HEK293T (cell line): ENCODE measurements at regions of chr11 and their contacts with region 1.

Region 1: DNA sequence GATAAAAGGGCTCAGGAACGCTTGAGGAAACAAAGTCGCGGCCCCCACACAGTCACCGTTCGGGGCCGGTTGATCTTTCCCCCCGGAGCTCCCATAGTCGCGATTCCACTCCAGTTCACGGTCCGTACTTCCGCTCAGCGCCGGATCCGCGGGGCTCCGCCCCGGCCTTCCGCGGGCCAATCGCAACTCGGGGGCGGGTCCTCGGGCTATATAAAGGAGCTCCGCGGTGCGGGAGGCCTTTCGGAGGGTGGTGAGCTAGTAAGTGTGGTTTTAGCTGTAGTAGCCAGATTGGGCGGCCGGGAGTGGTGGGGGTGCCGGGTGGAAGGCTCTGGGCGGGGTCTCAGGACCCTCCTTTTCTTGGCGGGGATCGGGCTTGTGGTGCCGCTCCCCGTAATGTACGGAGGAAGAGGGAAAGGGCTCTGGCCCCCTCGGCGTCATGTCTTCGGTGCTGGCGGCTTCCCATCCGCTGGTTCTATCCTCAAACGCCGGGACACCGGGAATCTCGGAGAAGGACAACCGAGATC is at the starts of genes C11orf98 and CSKMT:
- DNase-seq: peak; percentile 94

Region 2: DNA sequence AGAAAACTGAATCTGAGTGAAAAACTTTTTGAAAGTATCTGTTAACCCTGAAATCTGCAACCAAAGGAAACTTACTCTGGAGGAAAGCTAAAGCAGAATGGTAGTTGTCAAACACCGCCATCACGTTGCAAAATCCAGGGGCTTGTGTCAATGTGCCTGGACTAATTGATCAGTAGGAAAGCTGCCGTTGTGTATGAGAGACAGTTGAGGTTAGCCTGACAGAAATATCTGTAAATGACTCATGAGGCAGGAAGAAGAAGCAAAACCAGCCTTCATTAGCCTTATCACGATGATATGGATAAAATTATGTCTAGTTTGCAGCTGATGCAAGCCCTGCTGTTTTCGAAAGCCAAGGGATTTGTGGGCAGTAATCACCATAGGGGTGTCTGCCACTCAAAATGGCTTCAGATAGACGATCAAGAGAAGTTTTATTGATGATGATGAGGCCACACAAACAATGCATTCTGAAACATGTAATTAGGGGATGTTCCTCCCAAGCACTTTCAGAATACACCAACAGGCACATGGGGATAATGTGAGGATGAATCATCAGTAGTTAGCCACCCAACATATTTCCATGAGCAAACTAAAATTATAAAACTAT is 237.4 kb before region 1 on chr11:
- CTCF ChIA-PET with region 1: no interaction called
- POLR2A ChIA-PET with region 1: no interaction called
- DNase-seq: no peak

Region 3: GRCh38 chr11:62573592-62574362 is 91.4 kb before region 1 on chr11 and contains the start of gene EEF1G:
- CTCF ChIA-PET with region 1: no interaction called
- POLR2A ChIA-PET with region 1: interaction called, 10 read pairs
- DNase-seq: peak; percentile 98

Region 4: DNA sequence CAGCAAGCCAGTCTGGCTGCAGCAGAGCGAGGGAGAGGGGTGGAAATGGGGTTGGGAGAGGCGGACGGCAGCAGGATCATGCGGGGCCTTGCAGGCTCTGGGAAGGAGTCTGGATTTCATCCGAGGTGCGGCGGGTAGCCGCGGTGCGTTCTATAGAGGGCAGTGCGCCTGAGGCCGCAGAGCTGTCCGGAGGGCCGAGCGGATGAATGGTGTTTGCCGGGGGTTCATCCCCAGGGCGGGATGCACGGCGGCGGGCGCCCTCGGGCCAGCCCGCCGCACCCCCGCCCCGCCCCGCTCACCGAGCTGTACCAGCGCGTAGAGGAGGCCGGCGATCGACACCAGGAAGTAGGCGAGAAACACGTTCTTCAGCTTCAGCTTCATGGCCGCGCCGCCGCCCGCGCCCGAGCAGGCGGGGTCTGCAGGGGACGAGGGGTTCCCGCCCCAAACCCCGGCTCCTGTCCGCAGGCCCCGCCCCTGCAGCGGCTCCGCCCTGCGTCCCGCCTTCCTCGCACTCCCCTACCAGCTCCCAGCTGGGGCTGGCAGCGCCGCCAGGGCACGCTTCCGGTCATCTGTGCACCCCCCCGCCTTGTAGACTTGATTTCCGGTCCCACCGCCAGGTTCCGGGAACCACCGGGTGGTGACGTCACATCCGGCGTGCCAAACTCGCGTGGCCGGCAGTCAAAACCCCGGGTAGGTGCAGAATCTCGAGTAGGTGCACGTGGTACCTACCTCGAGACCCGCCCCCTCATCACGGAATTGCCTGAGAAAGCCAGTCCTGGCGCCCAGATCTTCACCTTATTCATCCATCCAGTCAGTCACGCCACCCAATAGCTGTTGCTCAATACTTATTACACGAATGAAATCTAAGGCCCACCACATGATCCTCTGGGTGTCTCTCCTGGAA is 43.3 kb before region 1 on chr11 and contains the start of gene B3GAT3:
- CTCF ChIA-PET with region 1: no interaction called
- POLR2A ChIA-PET with region 1: interaction called, 13 read pairs
- DNase-seq: peak; percentile 98

Region 5: DNA sequence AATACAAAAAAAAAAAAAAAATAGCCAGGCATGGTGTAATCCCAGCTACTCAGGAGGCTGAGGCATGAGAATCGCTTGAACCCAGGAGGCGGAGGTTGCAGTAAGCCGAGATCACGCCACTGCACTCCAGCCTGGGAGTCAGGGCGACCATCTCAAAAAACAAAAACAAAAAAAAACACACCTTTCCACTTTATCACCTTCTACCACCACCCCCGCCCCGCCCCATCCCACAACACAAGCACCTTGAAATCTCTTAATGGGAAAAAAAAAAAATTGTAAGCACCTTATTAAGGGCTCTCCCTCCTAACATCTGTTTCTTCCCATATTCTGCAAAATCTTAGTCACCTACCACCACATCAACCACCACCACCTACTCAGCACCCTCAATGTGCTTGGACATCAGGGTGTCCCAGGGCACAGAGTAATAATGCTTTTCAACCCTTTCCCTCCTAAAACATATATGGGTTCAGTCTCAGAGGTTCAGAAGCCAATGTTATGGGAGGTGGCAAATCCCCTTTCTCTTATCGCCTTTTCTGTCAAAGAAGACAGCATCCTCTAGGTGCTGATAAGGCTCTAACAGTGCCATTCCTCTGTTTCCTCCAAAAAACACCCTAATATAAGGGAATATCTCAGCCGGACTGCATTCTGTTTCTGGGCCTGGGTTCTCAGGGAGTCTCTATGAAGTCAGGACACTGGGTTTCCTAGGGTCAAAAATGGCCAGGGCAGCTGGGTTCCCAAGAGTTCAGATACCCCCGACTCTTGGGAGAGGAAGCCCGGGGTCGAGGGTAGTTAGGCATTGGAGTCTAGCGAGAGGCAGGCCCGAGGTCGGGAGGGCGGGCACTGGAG is 12.8 kb before region 1 on chr11:
- CTCF ChIA-PET with region 1: no interaction called
- POLR2A ChIA-PET with region 1: interaction called, 90 read pairs
- DNase-seq: no peak

Region 6: GRCh38 chr11:62689421-62690183 is 24.5 kb after region 1 on chr11 and contains the start of gene LRRN4CL:
- CTCF ChIA-PET with region 1: no interaction called
- POLR2A ChIA-PET with region 1: interaction called, 16 read pairs
- DNase-seq: no peak

Region 7: GRCh38 chr11:62805076-62805892 is 140.1 kb after region 1 on chr11 and contains the start of gene NXF1:
- CTCF ChIA-PET with region 1: no interaction called
- POLR2A ChIA-PET with region 1: no interaction called
- DNase-seq: peak; percentile 99